Panc1 (cell line): ENCODE measurements at regions of chr14 and their contacts with region 1.

Region 1: DNA sequence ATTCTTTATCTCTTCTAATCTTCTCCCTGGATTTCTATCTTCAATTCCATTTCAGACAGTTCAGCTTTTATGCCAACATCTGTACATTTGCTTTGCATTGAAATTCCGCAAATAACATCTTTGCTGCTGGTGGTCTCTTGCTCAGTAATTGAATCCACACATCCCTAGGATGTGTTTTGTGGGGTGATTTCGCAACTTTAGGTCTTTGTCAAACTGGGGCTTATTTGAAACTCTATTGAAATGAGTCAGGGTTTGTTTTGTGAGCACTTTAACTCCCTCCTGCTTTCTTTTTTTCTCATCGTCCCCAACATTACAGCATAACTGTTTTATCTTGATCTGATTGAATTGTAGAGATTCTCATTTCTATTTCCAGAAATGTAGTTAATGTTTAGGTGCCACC is 404.3 kb downstream of the NPAS3 start:
- DNase-seq: no peak
- ATAC-seq: no peak
- H3K4me3 ChIP-seq: no peak overlapping the region
- H3K27ac ChIP-seq: no peak overlapping the region
- H3K4me1 ChIP-seq: no peaks in the 10 kb centered on the region
- H3K27me3 ChIP-seq: no peaks in the 10 kb centered on the region
- CTCF ChIP-seq: no peak

Region 2: GRCh38 chr14:32808644-32809043 is 534.4 kb before region 1 on chr14:
- CTCF ChIA-PET with region 1: no interaction called
- POLR2A ChIA-PET with region 1: no interaction called
- in situ Hi-C with region 1: no loop called
- intact Hi-C with region 1: loop called (anchors 10 kb)
- DNase-seq: no peak
- ATAC-seq: no peak
- H3K4me3 ChIP-seq: no peak overlapping the region
- H3K27ac ChIP-seq: no peak overlapping the region
- H3K4me1 ChIP-seq: no peaks in the 10 kb centered on the region
- H3K27me3 ChIP-seq: no peaks in the 10 kb centered on the region
- CTCF ChIP-seq: no peak

Region 3: DNA sequence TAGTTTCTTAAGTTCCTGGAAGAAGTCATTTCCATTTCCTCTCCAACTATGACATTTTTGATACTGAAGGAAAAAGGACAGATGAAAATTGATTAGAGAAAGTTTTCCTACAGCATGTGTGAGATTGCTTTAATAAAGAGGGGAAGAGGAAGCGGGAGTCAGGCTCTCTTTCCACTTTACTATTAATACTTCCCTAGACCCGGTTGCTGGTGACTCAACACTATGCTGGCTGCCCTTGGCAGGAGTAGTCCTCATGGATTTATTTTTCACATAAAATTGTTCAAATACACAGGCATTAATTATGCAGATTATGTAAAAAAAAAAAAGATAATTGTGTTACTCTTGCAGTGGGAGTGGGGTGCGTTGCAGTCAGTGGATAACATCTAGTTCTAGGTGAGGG is 314.5 kb after region 1 on chr14:
- CTCF ChIA-PET with region 1: no interaction called
- POLR2A ChIA-PET with region 1: no interaction called
- in situ Hi-C with region 1: no loop called
- intact Hi-C with region 1: no loop called
- DNase-seq: no peak
- ATAC-seq: no peak
- H3K4me3 ChIP-seq: no peak overlapping the region
- H3K27ac ChIP-seq: no peak overlapping the region
- H3K4me1 ChIP-seq: no peaks in the 10 kb centered on the region
- H3K27me3 ChIP-seq: no peaks in the 10 kb centered on the region
- CTCF ChIP-seq: no peak